Gastrocnemius medialis (tissue), 4 donors: ENCODE measurements at regions of chr9 and their contacts with region 1.

Region 1: GRCh38 chr9:92790542-92791527 is 26.2 kb upstream of the BICD2 start:
- DNase-seq: peak; percentile 49 to 72
- ATAC-seq: peak; percentile 96 to 99
- H3K4me3 ChIP-seq: no peak overlapping the region
- H3K27ac ChIP-seq: no peak overlapping the region
- H3K4me1 ChIP-seq: no peaks in the 10 kb centered on the region
- H3K27me3 ChIP-seq: no peaks in the 10 kb centered on the region
- CTCF ChIP-seq: peak; percentile 78 to 88 (median 85)
- POLR2A ChIP-seq: no peak

Region 2: GRCh38 chr9:92133949-92134604 is 656.8 kb before region 1 on chr9:
- in situ Hi-C with region 1: loop called in 2 of 4 experiments (anchors 25 kb)
- intact Hi-C with region 1: loop called (anchors 10 kb)
- DNase-seq: peak in 1 of 2 donors; percentile 58
- ATAC-seq: peak in 1 of 2 donors; percentile 87
- H3K4me3 ChIP-seq: no peak overlapping the region
- H3K27ac ChIP-seq: no peak overlapping the region
- H3K4me1 ChIP-seq: no peaks in the 10 kb centered on the region
- H3K27me3 ChIP-seq: no peaks in the 10 kb centered on the region
- CTCF ChIP-seq: peak; percentile 56 to 91 (median 70)
- POLR2A ChIP-seq: no peak

Region 3: GRCh38 chr9:92325269-92325990 is 465.4 kb before region 1 on chr9 and contains the starts of genes CENPP and NOL8:
- in situ Hi-C with region 1: loop called in 1 of 4 experiments (anchors 25 kb)
- intact Hi-C with region 1: no loop called
- DNase-seq: peak; percentile 80 to 85
- ATAC-seq: peak; percentile 98
- H3K4me3 ChIP-seq: peak within 1 kb of the TSS; percentile 77 to 95 (median 85)
- H3K27ac ChIP-seq: peak within 1 kb of the TSS; percentile 91 to 98 (median 97)
- H3K4me1 ChIP-seq: peaks cover 21 to 31% of the 10 kb centered on the region in 2 donors
- H3K27me3 ChIP-seq: no peaks in the 10 kb centered on the region
- CTCF ChIP-seq: peak in 1 of 5 experiments; percentile 24
- POLR2A ChIP-seq: peak in 1 of 2 donors; percentile 67
- total RNA-seq, gene CENPP: 1.8 to 11.5 (median 8.7) TPM
- total RNA-seq, gene NOL8: 11.5 to 20.2 (median 14.0) TPM

Region 4: GRCh38 chr9:92669890-92670708 is 120.7 kb before region 1 on chr9 and contains the start of gene IPPK:
- in situ Hi-C with region 1: no loop called
- intact Hi-C with region 1: loop called (anchors 5 kb)
- DNase-seq: peak; percentile 95 to 97
- ATAC-seq: peak; percentile 98
- H3K4me3 ChIP-seq: peak within 1 kb of the TSS; percentile 65 to 95 (median 82)
- H3K27ac ChIP-seq: peak within 1 kb of the TSS; percentile 83 to 92 (median 87)
- H3K4me1 ChIP-seq: peaks cover 24 to 25% of the 10 kb centered on the region in 2 donors
- H3K27me3 ChIP-seq: no peaks in the 10 kb centered on the region
- CTCF ChIP-seq: no peak
- POLR2A ChIP-seq: peak; percentile 52 to 73
- total RNA-seq, gene IPPK: 6.8 to 11.4 (median 7.5) TPM

Region 5: DNA sequence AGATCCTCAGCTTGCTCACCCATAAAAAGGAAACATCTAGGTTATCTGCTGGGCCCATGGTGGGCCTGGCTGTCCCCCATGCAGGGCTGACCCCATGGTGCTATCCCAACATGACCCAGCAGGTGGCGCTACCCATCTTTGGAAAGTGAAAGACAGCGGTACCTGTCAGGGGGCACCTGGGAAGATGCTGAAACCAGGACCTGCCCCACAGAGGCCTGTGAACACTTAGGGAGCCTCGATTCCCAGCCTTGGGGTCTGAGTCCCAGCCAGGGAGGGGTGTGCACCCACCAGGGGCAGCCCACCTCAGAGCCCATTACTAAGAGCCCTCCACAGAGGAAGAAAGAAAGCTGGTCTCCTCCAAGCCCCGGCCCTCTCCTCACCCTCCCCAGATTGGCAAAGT is 74.3 kb before region 1 on chr9:
- in situ Hi-C with region 1: loop called (anchors 5 kb)
- intact Hi-C with region 1: loop called (anchors 1 kb)
- DNase-seq: peak in 1 of 2 donors; percentile 37
- ATAC-seq: peak in 1 of 2 donors; percentile 72
- H3K4me3 ChIP-seq: no peak overlapping the region
- H3K27ac ChIP-seq: no peak overlapping the region
- H3K4me1 ChIP-seq: no peaks in the 10 kb centered on the region
- H3K27me3 ChIP-seq: no peaks in the 10 kb centered on the region
- CTCF ChIP-seq: peak; percentile 72 to 93 (median 90)
- POLR2A ChIP-seq: no peak

Region 6: DNA sequence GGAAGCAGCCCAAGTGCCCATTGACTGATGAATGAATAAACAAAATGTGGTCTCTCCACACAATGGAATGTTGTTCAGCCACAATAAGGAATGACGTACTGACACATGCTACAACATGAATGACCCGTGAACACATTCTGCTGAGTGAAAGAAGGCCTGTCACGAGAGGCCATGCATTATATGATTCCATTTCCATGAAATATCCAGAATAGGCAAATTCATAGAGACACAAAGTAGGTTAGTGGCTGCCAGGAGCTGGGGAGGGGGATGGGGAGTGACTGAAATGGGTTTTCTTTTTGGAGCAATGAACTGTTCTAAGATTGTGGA is 67.6 kb before region 1 on chr9:
- in situ Hi-C with region 1: loop called (anchors 5 kb)
- intact Hi-C with region 1: no loop called
- DNase-seq: no peak
- ATAC-seq: no peak
- H3K4me3 ChIP-seq: no peak overlapping the region
- H3K27ac ChIP-seq: no peak overlapping the region
- H3K4me1 ChIP-seq: peaks cover 0 to 6% of the 10 kb centered on the region in 2 donors
- H3K27me3 ChIP-seq: no peaks in the 10 kb centered on the region
- CTCF ChIP-seq: no peak
- POLR2A ChIP-seq: no peak

Region 7: DNA sequence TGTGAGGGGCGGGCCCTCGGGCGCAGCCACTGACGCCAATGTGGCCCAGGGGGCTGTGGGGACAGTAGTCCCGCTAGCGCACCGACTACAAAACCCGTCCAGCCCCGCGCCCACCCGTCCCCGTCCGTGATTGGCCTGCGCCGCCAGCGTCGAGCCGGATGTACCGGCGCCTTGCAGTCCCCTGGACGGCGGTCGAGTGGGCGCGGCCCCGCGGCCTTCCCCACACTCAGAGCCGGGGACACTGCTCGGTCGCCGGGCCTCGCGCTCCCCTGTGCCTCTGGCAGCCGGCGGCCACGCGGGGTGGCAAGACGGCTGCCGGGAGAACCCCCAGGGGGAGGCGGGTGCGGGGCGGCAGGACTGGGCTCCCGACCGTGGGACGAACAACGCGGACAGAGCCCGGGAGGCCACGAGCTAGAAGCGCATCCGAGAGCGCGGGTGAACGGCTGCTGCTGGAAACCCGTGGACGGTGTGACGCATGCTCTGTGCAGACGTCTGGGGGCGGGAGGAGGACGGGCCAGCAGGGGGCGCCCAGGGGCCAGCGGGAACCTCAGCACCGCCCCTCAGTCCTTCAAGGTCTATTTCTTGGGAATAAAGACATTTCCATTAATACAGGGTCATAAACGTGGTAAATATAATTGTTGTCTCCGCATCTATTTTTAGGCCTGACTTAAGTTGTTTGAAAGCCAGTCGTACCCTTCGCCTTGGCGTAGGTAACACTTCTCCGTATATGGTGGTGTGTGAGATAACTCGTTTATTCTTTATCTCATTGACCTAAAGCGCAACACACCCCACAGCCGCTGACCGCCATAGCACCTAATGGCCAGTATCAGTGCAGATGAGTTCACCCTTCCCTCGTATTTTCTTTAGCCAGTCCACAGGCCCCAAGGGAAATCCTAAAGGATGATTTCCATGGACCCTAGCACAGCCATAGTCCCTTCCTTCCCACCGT is 25.6 kb before region 1 on chr9:
- in situ Hi-C with region 1: no loop called
- intact Hi-C with region 1: loop called (anchors 1 kb)
- DNase-seq: peak; percentile 99
- ATAC-seq: peak; percentile 84 to 86
- H3K4me3 ChIP-seq: peak overlapping the region; percentile 72 to 99 (median 94)
- H3K27ac ChIP-seq: peak overlapping the region; percentile 93 to 100 (median 98)
- H3K4me1 ChIP-seq: peaks cover 38 to 47% of the 10 kb centered on the region in 2 donors
- H3K27me3 ChIP-seq: no peaks in the 10 kb centered on the region
- CTCF ChIP-seq: peak; percentile 83 to 98 (median 96)
- POLR2A ChIP-seq: peak; percentile 80 to 82

Region 8: GRCh38 chr9:92860867-92861266 is 70.0 kb after region 1 on chr9:
- in situ Hi-C with region 1: no loop called
- intact Hi-C with region 1: no loop called
- DNase-seq: no peak
- ATAC-seq: no peak
- H3K4me3 ChIP-seq: no peak overlapping the region
- H3K27ac ChIP-seq: no peak overlapping the region
- H3K4me1 ChIP-seq: no peaks in the 10 kb centered on the region
- H3K27me3 ChIP-seq: no peaks in the 10 kb centered on the region
- CTCF ChIP-seq: no peak
- POLR2A ChIP-seq: no peak